CD4-positive, alpha-beta memory T cell (primary cell): ENCODE measurements at regions of chr22 and their contacts with region 1.

Region 1: GRCh38 chr22:41237707-41238569 is 2.8 kb downstream of the CHADL start:
- DNase-seq: peak; percentile 81 to 84 (median 82)
- H3K4me3 ChIP-seq: peak overlapping the region in 1 of 2 donors; percentile 12
- H3K4me3 Mint-ChIP-seq: peak overlapping the region in 6 of 8 donors; percentile 15 to 82 (median 67)
- H3K27ac ChIP-seq: no peak overlapping the region
- H3K27ac Mint-ChIP-seq: peak overlapping the region in 1 of 7 donors; percentile 70
- H3K4me1 ChIP-seq: peaks cover 13% of the 10 kb centered on the region
- H3K4me1 Mint-ChIP-seq: peaks cover 4 to 14% (median 6%) of the 10 kb centered on the region in 4 donors
- H3K27me3 ChIP-seq: no peaks in the 10 kb centered on the region
- H3K27me3 Mint-ChIP-seq: no peaks in the 10 kb centered on the region

Region 2: GRCh38 chr22:40957601-40958000 is 280.3 kb before region 1 on chr22:
- CTCF ChIA-PET with region 1: no interaction called
- POLR2A ChIA-PET with region 1: no interaction called
- intact Hi-C with region 1: no loop called
- DNase-seq: no peak
- H3K4me3 ChIP-seq: no peak overlapping the region
- H3K4me3 Mint-ChIP-seq: no peak overlapping the region
- H3K27ac ChIP-seq: no peak overlapping the region
- H3K27ac Mint-ChIP-seq: no peak overlapping the region
- H3K4me1 ChIP-seq: peaks cover 20% of the 10 kb centered on the region
- H3K4me1 Mint-ChIP-seq: peaks cover 16 to 39% (median 24%) of the 10 kb centered on the region in 4 donors
- H3K27me3 ChIP-seq: no peaks in the 10 kb centered on the region
- H3K27me3 Mint-ChIP-seq: no peaks in the 10 kb centered on the region

Region 3: GRCh38 chr22:41022470-41023298 is 215.3 kb before region 1 on chr22:
- CTCF ChIA-PET with region 1: no interaction called
- POLR2A ChIA-PET with region 1: interaction called, 12 read pairs
- intact Hi-C with region 1: no loop called
- DNase-seq: peak; percentile 72 to 82 (median 78)
- H3K4me3 ChIP-seq: peak overlapping the region in 1 of 2 donors; percentile 59
- H3K4me3 Mint-ChIP-seq: peak overlapping the region; percentile 70 to 88 (median 78)
- H3K27ac ChIP-seq: peak overlapping the region; percentile 70
- H3K27ac Mint-ChIP-seq: peak overlapping the region; percentile 38 to 92 (median 89)
- H3K4me1 ChIP-seq: peaks cover 18% of the 10 kb centered on the region
- H3K4me1 Mint-ChIP-seq: peaks cover 8 to 32% (median 15%) of the 10 kb centered on the region in 4 donors
- H3K27me3 ChIP-seq: no peaks in the 10 kb centered on the region
- H3K27me3 Mint-ChIP-seq: no peaks in the 10 kb centered on the region

Region 4: DNA sequence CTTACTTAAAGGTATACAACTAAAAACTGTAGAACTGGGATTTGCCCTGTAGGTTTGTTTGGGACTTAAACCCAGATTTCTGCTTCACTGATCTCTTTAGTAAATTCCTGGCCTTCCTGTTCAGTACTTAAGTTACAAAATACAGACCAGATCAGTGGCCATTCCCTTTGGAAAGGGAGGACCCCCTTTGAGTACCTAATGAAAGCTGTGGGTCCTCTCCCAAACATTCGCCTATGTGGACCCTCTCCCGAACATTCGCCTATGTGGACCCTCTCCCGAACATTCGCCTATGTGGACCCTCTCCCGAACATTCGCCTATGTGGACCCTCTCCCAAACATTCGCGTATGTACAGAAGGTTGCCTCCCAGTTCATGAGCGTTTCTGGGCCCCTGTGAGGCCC is 22.5 kb before region 1 on chr22:
- CTCF ChIA-PET with region 1: interaction called, 12 read pairs
- POLR2A ChIA-PET with region 1: interaction called, 6 read pairs
- intact Hi-C with region 1: no loop called
- DNase-seq: no peak
- H3K4me3 ChIP-seq: no peak overlapping the region
- H3K4me3 Mint-ChIP-seq: no peak overlapping the region
- H3K27ac ChIP-seq: no peak overlapping the region
- H3K27ac Mint-ChIP-seq: peak overlapping the region in 1 of 7 donors; percentile 25
- H3K4me1 ChIP-seq: peaks cover 14% of the 10 kb centered on the region
- H3K4me1 Mint-ChIP-seq: peaks cover 10 to 32% (median 23%) of the 10 kb centered on the region in 4 donors
- H3K27me3 ChIP-seq: no peaks in the 10 kb centered on the region
- H3K27me3 Mint-ChIP-seq: no peaks in the 10 kb centered on the region

Region 5: DNA sequence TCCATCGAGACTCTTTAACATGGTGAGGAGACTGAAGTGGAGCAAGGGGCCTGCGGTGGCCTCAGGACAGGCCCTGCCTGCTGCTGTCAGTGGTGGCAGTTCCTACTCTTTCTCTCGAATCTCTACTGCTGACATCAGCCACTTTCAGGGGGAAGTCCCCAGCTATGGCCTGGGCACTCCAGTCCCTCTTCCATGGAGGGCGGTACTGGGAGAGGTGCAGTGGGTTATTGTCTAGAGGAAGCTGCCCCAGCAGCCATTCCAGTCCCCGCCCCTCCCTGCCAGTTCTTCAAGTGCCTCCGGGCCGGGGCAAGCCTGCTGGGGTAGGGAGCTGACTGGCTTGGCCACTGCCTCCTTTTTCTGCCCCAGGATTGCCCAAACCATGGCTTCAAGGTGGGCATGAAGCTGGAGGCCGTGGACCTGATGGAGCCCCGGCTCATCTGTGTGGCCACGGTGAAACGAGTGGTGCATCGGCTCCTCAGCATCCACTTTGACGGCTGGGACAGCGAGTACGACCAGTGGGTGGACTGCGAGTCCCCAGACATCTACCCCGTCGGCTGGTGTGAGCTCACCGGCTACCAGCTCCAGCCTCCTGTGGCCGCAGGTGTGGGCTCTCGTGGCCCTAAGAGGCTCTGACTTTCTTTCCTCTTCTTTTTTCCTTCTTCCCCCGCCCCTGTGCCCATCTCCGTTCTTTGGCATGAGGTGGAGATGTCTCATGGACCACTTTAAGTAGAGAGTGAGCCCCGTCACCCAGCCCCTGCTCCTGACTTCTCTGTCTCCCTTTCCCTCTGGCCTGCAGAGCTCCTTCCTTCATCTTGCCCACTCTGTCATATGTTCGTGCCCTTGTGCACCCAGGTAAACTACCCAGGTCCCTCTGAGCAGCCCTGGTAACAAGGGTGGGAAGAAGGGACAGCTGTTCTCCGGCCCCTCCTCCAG is 10.9 kb before region 1 on chr22:
- CTCF ChIA-PET with region 1: interaction called, 10 read pairs
- POLR2A ChIA-PET with region 1: interaction called, 21 read pairs
- intact Hi-C with region 1: no loop called
- DNase-seq: no peak
- H3K4me3 ChIP-seq: no peak overlapping the region
- H3K4me3 Mint-ChIP-seq: no peak overlapping the region
- H3K27ac ChIP-seq: no peak overlapping the region
- H3K27ac Mint-ChIP-seq: no peak overlapping the region
- H3K4me1 ChIP-seq: no peaks in the 10 kb centered on the region
- H3K4me1 Mint-ChIP-seq: no peaks in the 10 kb centered on the region
- H3K27me3 ChIP-seq: no peaks in the 10 kb centered on the region
- H3K27me3 Mint-ChIP-seq: no peaks in the 10 kb centered on the region

Region 6: GRCh38 chr22:41301105-41302020 is 63.4 kb after region 1 on chr22 and contains the start of gene ZC3H7B:
- CTCF ChIA-PET with region 1: interaction called, 6 read pairs
- POLR2A ChIA-PET with region 1: interaction called, 14 read pairs
- intact Hi-C with region 1: loop called (anchors 5 kb)
- DNase-seq: peak; percentile 84 to 92 (median 85)
- H3K4me3 ChIP-seq: peak within 1 kb of the TSS; percentile 54 to 76
- H3K4me3 Mint-ChIP-seq: peak within 1 kb of the TSS; percentile 86 to 89 (median 88)
- H3K27ac ChIP-seq: peak within 1 kb of the TSS; percentile 88
- H3K27ac Mint-ChIP-seq: peak within 1 kb of the TSS; percentile 83 to 97 (median 96)
- H3K4me1 ChIP-seq: peaks cover 24% of the 10 kb centered on the region
- H3K4me1 Mint-ChIP-seq: peaks cover 19 to 38% (median 30%) of the 10 kb centered on the region in 4 donors
- H3K27me3 ChIP-seq: no peaks in the 10 kb centered on the region
- H3K27me3 Mint-ChIP-seq: no peaks in the 10 kb centered on the region
- total RNA-seq, gene ZC3H7B: 39.4 to 40.3 TPM

Region 7: GRCh38 chr22:41381329-41382097 is 143.6 kb after region 1 on chr22 and contains the start of gene TEF:
- CTCF ChIA-PET with region 1: interaction called, 12 read pairs
- POLR2A ChIA-PET with region 1: no interaction called
- intact Hi-C with region 1: no loop called
- DNase-seq: peak; percentile 99
- H3K4me3 ChIP-seq: peak within 1 kb of the TSS; percentile 65 to 88
- H3K4me3 Mint-ChIP-seq: peak within 1 kb of the TSS; percentile 90 to 97 (median 94)
- H3K27ac ChIP-seq: peak within 1 kb of the TSS; percentile 87
- H3K27ac Mint-ChIP-seq: peak within 1 kb of the TSS; percentile 98 to 99 (median 98)
- H3K4me1 ChIP-seq: peaks cover 18% of the 10 kb centered on the region
- H3K4me1 Mint-ChIP-seq: peaks cover 12 to 36% (median 22%) of the 10 kb centered on the region in 4 donors
- H3K27me3 ChIP-seq: no peaks in the 10 kb centered on the region
- H3K27me3 Mint-ChIP-seq: no peaks in the 10 kb centered on the region
- total RNA-seq, gene TEF: 6.5 to 8.8 TPM